Left cardiac atrium (tissue), 4 donors: ENCODE measurements at regions of chr13 and their contacts with region 1.

Region 1: DNA sequence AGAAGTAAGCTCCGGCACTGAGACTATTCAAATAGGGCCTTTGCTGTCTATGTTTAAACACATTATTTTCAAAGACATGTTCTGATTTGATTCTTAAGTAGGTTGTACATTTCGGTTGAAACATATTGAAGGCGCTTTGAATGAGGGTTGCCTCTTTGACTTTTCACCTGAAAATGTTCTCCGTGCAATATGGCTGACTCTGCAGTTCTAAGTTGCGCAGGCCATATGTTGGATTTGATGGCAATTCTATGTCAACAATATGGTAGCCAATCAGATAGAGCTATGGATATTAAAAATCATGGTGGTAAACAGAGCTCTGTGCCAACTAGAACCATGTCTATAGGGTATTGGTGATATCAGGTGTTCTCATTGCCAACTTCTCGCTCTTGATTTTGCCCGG is 307.3 kb downstream of the NALCN start:
- DNase-seq: no peak
- ATAC-seq: no peak

Region 2: DNA sequence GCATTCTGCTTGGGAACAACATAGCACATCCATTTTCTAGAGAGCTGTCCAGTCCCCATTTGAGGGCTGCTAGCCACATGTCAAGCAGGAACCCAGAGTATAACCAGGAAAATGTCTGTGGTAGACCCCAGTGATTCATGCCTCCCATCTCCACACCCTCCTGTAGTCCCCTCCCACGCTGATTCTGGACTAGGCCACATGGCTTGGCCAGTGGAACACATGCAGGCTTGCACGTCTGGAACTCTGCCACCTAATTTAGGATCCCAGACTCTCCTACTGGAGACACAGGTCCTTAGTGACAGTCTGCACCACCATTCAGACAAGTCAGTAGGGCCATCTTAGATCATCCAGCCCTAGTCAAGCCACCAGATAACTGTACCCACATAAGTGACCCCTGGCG is 1287.3 kb before region 1 on chr13:
- intact Hi-C with region 1: no loop called
- DNase-seq: no peak
- ATAC-seq: no peak

Region 3: DNA sequence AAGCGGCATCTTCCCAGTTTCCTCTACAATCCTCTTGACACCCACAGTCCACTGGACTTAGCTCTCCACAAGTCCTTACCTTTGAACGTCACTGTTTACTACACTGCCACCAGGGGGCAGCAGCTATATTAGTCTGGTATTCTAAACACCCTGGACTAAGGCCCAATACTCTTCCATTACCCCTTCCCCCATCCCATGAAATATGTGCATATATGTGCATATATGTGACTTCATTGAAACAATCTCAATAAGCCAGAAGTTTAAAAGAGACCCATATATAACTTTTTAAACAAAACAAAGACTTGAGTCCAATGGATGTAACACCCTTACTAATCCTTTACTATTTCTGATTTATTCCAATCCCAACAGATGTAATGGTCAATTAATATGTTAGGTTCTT is 535.9 kb before region 1 on chr13:
- intact Hi-C with region 1: loop called in 1 of 2 experiments (anchors 10 kb)
- DNase-seq: peak; percentile 74
- ATAC-seq: peak; percentile 68 to 71

Region 4: DNA sequence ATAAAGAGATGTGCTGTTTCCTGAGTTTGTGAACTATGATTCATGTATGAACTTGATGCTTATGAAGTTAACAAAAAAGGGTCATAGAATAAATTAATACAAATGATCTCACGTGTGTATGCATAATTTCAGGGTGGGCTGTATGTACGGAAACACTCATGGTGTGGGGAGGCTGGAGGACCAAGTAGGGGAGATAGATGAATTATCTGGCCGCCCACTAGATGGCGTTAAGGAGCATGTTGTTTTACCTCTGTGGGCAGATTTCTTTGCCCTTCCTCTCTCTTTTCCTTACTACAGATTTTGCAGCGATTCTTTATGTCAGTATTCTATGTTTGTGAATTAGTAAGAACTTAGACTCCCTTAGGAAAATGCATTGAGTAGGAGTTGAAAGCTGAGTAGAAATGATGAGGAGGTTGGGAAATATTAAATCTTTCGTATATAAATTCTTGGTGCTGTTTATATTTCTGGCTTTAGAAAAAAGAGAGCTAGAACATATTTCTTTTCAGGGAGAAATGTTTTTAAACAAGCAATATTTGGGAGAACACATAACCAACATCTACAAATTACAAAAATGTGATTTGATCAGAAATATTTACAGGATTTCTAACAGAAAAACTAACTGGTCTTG is 387.0 kb before region 1 on chr13:
- intact Hi-C with region 1: loop called (anchors 5 to 10 kb)
- DNase-seq: peak; percentile 39
- ATAC-seq: peak in 1 of 2 donors; percentile 44

Region 5: GRCh38 chr13:101049166-101049850 is 59.7 kb before region 1 on chr13:
- intact Hi-C with region 1: no loop called
- DNase-seq: no peak
- ATAC-seq: no peak